PC-9 (cell line): ENCODE measurements at regions of chr5 and their contacts with region 1.

Region 1: DNA sequence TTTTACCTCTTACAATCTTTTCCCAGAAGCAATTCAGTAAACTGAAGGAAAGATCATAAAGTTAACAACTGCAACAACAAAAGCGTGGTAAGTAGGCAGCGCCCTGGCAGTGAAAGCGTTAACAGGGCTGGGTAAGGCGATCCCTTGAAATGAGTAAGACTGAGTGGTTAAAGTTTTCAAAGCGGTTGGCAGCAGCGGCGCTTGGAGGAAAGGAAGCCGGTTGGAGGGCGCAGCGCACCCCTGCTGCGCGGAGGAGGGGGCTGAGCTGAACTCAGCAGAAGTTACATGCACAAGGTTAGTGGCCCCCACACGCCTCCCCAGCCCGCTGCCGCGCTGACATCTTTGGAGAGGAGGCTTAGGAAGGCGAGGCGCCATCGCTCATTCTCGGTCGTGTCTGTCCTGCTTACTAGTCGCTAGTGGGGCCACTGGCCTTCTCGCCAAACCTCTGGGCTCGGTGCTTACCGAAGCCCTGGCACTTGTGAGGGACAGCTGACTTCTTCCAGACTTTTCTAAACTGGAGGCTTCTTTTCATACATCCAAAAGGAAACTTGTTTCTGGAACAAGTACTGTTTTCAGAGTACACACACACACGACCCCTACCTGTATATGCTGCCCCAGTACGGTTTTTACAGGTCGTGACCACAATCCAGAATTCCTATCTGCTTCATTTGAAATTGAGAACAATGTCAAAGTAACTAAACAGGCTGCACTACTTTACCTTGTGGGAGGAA is at the start of gene SH3RF2:
- DNase-seq: peak; percentile 85 to 89
- H3K4me3 ChIP-seq: peak within 1 kb of the TSS; percentile 77
- H3K27ac ChIP-seq: peak within 1 kb of the TSS; percentile 92
- H3K4me1 ChIP-seq: peaks cover 61% of the 10 kb centered on the region
- H3K27me3 ChIP-seq: no peaks in the 10 kb centered on the region
- CTCF ChIP-seq: no peak
- total RNA-seq, gene SH3RF2: 30.9 and 37.2 TPM in 2 replicates

Region 2: GRCh38 chr5:145637396-145637795 is 299.2 kb before region 1 on chr5:
- CTCF ChIA-PET with region 1: no interaction called
- POLR2A ChIA-PET with region 1: no interaction called
- intact Hi-C with region 1: no loop called
- DNase-seq: no peak
- H3K4me3 ChIP-seq: no peak overlapping the region
- H3K27ac ChIP-seq: no peak overlapping the region
- H3K4me1 ChIP-seq: no peaks in the 10 kb centered on the region
- H3K27me3 ChIP-seq: no peaks in the 10 kb centered on the region
- CTCF ChIP-seq: no peak

Region 3: DNA sequence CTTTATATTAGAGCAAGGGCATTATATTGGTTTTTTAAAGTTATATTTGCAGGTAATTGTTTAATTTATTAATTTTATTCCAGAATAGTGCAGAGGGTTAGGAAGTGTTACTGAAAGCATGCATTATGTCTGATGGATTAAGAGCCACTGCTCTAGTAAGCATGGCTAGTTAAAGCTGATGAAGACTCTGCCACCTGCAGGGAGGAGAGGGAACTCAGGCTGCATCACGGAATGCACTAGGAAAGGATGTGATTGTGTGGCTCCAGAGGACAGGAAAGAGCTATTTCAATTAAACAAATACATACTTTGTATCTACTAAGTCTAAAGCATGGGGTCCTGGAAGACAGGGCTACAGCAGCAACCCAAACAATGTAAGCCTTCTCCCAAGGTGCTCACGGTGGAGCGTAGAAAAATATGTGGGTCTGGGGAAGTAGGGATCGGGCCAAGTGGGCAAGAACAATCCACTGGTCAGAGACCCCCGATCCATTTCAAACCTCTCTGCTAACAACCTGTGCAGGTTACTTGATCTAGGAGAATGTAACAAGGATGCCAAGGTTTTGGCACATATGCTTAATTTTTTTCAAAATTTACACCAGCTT is 48.5 kb before region 1 on chr5:
- CTCF ChIA-PET with region 1: no interaction called
- POLR2A ChIA-PET with region 1: no interaction called
- intact Hi-C with region 1: no loop called
- DNase-seq: peak; percentile 49 to 55
- H3K4me3 ChIP-seq: no peak overlapping the region
- H3K27ac ChIP-seq: no peak overlapping the region
- H3K4me1 ChIP-seq: no peaks in the 10 kb centered on the region
- H3K27me3 ChIP-seq: no peaks in the 10 kb centered on the region
- CTCF ChIP-seq: peak; percentile 80

Region 4: DNA sequence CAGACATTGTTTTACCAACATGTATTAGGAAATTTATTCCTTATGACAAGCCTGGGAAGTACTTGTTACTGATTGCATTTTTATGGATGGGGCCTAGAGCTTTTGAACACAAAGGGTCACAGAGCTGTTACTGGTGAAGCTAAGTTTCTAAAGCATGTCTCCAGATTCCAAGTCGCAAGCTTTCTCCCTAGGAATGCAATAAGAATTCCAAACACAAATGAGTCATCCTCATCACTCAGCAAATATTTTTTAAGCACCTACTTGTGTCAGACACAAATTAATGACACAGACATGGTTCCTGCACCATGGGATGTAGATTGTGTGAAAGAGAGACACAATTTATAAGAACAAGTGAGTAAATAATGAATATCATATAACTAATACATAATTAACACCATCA is 11.2 kb before region 1 on chr5:
- CTCF ChIA-PET with region 1: no interaction called
- POLR2A ChIA-PET with region 1: interaction called, 5 read pairs
- intact Hi-C with region 1: loop called (anchors 1 kb)
- DNase-seq: peak; percentile 31 to 95
- H3K4me3 ChIP-seq: no peak overlapping the region
- H3K27ac ChIP-seq: peak overlapping the region; percentile 73
- H3K4me1 ChIP-seq: peaks cover 28% of the 10 kb centered on the region
- H3K27me3 ChIP-seq: no peaks in the 10 kb centered on the region
- CTCF ChIP-seq: no peak

Region 5: GRCh38 chr5:145975361-145976066 is 38.9 kb after region 1 on chr5:
- CTCF ChIA-PET with region 1: interaction called, 4 read pairs
- POLR2A ChIA-PET with region 1: interaction called, 7 read pairs
- intact Hi-C with region 1: loop called (anchors 2 kb)
- DNase-seq: peak; percentile 66 to 77
- H3K4me3 ChIP-seq: no peak overlapping the region
- H3K27ac ChIP-seq: peak overlapping the region; percentile 32; the same call in 1 of the 2 replicates
- H3K4me1 ChIP-seq: peaks cover 46% of the 10 kb centered on the region
- H3K27me3 ChIP-seq: no peaks in the 10 kb centered on the region
- CTCF ChIP-seq: no peak

Region 6: DNA sequence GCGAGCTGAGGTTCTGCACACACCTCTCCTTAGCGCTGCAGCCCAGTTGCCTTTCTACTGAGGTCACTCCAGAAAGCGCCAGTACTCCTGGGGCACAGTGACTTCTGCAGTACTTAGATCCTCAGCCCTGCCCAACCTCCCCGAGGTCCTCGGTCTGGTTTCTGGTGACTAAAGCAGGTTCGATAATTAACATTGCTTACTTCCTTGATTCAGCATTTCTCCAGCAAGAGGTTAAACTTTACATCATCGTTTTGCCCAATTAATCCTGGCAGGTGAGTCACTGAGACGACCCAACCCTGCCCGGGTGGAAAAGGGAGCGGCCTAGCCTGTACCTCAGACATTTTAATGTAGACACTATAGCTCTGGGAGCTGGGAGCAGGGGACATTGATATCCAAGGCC is 91.2 kb after region 1 on chr5:
- CTCF ChIA-PET with region 1: no interaction called
- POLR2A ChIA-PET with region 1: interaction called, 7 read pairs
- intact Hi-C with region 1: loop called (anchors 5 kb)
- DNase-seq: peak; percentile 75 to 99
- H3K4me3 ChIP-seq: no peak overlapping the region; the same call in 1 of the 2 replicates
- H3K27ac ChIP-seq: peak overlapping the region; percentile 79
- H3K4me1 ChIP-seq: peaks cover 26% of the 10 kb centered on the region
- H3K27me3 ChIP-seq: no peaks in the 10 kb centered on the region
- CTCF ChIP-seq: no peak

Region 7: DNA sequence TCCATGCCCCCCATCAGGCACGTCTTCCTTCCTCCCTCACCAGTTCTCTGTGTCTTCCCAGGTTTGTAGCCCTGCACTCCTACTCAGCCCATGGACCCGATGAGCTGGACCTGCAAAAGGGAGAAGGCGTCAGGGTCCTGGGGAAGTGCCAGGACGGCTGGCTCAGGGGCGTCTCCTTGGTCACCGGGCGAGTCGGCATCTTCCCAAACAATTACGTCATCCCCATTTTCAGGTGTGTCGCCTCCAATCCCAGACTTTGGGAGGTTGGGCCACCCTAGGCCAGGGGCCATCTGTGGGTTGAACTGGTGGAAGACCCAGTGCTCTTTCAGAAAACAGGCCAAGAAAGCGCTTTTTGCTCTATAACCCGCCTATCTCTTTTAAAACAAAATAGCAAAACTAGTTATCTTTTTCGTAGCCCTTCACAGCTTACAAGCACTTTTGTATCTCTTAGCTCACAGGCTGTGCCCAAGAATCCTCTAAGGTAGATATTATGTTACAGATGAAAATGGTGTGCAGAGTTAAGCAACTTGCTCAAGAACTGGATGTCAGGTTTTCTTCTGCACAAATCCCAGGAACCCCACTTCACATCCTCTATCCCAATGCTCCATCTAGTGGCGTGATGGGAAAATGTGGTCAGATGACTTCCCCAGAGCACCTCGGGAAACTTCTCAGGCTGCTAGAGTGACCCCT is 112.6 kb after region 1 on chr5:
- CTCF ChIA-PET with region 1: interaction called, 4 read pairs
- POLR2A ChIA-PET with region 1: no interaction called
- intact Hi-C with region 1: loop called (anchors 1 kb)
- DNase-seq: peak; percentile 67 to 68
- H3K4me3 ChIP-seq: no peak overlapping the region
- H3K27ac ChIP-seq: no peak overlapping the region
- H3K4me1 ChIP-seq: no peaks in the 10 kb centered on the region
- H3K27me3 ChIP-seq: no peaks in the 10 kb centered on the region
- CTCF ChIP-seq: peak; percentile 92